CD8-positive, alpha-beta T cell (primary cell): ENCODE measurements at regions of chr10 and their contacts with region 1.

Region 1: GRCh38 chr10:44878706-44879530 is 32.2 kb upstream of the TMEM72 start:
- DNase-seq: peak; percentile 48 to 87 (median 75)
- ATAC-seq: peak; percentile 90
- H3K4me3 ChIP-seq: peak overlapping the region; percentile 49 to 66
- H3K4me3 Mint-ChIP-seq: peak overlapping the region; percentile 90
- H3K27ac ChIP-seq: no peak overlapping the region
- H3K27ac Mint-ChIP-seq: peak overlapping the region; percentile 71
- H3K4me1 ChIP-seq: peaks cover 6% of the 10 kb centered on the region
- H3K4me1 Mint-ChIP-seq: peaks cover 8% of the 10 kb centered on the region
- H3K27me3 ChIP-seq: no peaks in the 10 kb centered on the region
- H3K27me3 Mint-ChIP-seq: peaks cover 28% of the 10 kb centered on the region
- CTCF ChIP-seq: no peak

Region 2: DNA sequence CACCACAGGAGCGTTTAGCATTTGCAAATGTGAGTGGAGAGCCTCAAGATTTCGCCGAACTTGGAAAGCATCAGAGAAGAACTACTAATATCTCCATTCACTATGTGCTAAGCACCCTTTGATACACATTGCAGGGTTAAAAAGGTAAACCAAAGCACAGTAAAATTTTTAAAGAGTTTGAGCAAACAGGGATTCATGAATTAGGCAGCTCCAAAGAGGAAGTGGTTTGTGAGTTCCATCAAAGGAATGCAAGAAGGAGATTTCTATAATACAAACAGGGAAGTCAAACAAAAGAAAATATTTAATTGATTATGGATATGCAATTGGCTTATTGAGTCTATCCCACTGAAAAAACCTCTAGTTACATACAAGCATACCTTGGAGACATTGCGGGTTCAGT is 48.9 kb before region 1 on chr10:
- CTCF ChIA-PET with region 1: no interaction called
- POLR2A ChIA-PET with region 1: no interaction called
- intact Hi-C with region 1: no loop called
- DNase-seq: no peak
- ATAC-seq: no peak
- H3K4me3 ChIP-seq: no peak overlapping the region
- H3K4me3 Mint-ChIP-seq: no peak overlapping the region
- H3K27ac ChIP-seq: no peak overlapping the region
- H3K27ac Mint-ChIP-seq: no peak overlapping the region
- H3K4me1 ChIP-seq: no peaks in the 10 kb centered on the region
- H3K4me1 Mint-ChIP-seq: no peaks in the 10 kb centered on the region
- H3K27me3 ChIP-seq: no peaks in the 10 kb centered on the region
- H3K27me3 Mint-ChIP-seq: peaks cover 3% of the 10 kb centered on the region
- CTCF ChIP-seq: no peak

Region 3: GRCh38 chr10:44857363-44858016 is 21.4 kb before region 1 on chr10:
- CTCF ChIA-PET with region 1: interaction called, 10 read pairs
- POLR2A ChIA-PET with region 1: no interaction called
- intact Hi-C with region 1: no loop called
- DNase-seq: peak in 8 of 9 experiments; percentile 33 to 69 (median 58)
- ATAC-seq: peak; percentile 84
- H3K4me3 ChIP-seq: no peak overlapping the region
- H3K4me3 Mint-ChIP-seq: no peak overlapping the region
- H3K27ac ChIP-seq: no peak overlapping the region
- H3K27ac Mint-ChIP-seq: no peak overlapping the region
- H3K4me1 ChIP-seq: no peaks in the 10 kb centered on the region
- H3K4me1 Mint-ChIP-seq: no peaks in the 10 kb centered on the region
- H3K27me3 ChIP-seq: no peaks in the 10 kb centered on the region
- H3K27me3 Mint-ChIP-seq: peaks cover 4% of the 10 kb centered on the region
- CTCF ChIP-seq: peak; percentile 93

Region 4: DNA sequence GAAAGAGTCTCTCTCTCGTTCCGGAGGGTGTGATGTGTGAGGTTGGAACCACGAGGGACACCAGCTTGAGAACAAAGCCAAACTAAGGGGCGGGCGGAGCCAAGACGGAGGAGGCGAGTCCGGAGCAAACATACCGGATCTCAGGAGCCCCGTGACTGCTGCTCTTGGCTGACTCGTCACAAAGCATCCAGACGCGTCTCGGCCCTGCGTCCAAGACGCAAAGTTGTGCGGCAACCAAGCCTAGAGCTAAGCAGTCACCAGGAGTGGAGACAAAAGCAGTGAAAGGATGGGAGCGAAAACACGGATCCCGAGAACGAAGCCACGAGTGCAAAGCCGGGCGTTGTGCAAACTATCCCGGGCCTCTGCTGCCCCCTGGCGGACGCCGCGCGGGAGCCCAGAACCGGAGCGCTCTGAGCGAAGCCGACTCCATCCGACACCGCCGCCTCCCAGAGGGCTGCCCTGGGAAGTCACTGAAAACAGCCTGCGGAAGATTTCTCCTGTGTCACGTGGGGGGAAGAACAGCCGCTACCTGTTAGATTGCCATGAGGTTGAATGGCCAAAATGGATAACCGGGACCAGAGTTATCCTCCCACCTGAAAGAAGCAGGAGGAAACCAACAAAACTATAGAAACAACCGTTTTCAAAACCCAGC is 14.2 kb before region 1 on chr10:
- CTCF ChIA-PET with region 1: interaction called, 21 read pairs
- POLR2A ChIA-PET with region 1: no interaction called
- intact Hi-C with region 1: no loop called
- DNase-seq: peak; percentile 62 to 90 (median 79)
- ATAC-seq: peak; percentile 76
- H3K4me3 ChIP-seq: peak overlapping the region; percentile 64 to 78
- H3K4me3 Mint-ChIP-seq: peak overlapping the region; percentile 90
- H3K27ac ChIP-seq: no peak overlapping the region
- H3K27ac Mint-ChIP-seq: peak overlapping the region; percentile 12
- H3K4me1 ChIP-seq: peaks cover 14% of the 10 kb centered on the region
- H3K4me1 Mint-ChIP-seq: peaks cover 19% of the 10 kb centered on the region
- H3K27me3 ChIP-seq: peaks cover 2 to 6% of the 10 kb centered on the region in 2 experiments
- H3K27me3 Mint-ChIP-seq: peaks cover 51% of the 10 kb centered on the region
- CTCF ChIP-seq: peak; percentile 88